Activated CD4-positive, alpha-beta T cell treated with anti-CD3 and anti-CD28 coated beads, Interleukin-2, amount 10 ng/mL, durations not matched to agents 7 days and 5 days (primary cell): ENCODE measurements at regions of chr9 and their contacts with region 1.

Region 1: GRCh38 chr9:34637356-34638137 is at the start of gene SIGMAR1:
- DNase-seq: peak; percentile 94
- H3K4me3 Mint-ChIP-seq: peak within 1 kb of the TSS; percentile 90
- H3K27ac Mint-ChIP-seq: peak within 1 kb of the TSS; percentile 93
- H3K4me1 Mint-ChIP-seq: peaks cover 39% of the 10 kb centered on the region
- H3K27me3 Mint-ChIP-seq: no peaks in the 10 kb centered on the region
- total RNA-seq, gene SIGMAR1: 57.7 to 62.2 TPM

Region 2: GRCh38 chr9:34603610-34604231 is 33.8 kb before region 1 on chr9:
- CTCF ChIA-PET with region 1: interaction called, 60 read pairs
- POLR2A ChIA-PET with region 1: no interaction called
- DNase-seq: peak; percentile 85
- H3K4me3 Mint-ChIP-seq: no peak overlapping the region
- H3K27ac Mint-ChIP-seq: no peak overlapping the region
- H3K4me1 Mint-ChIP-seq: no peaks in the 10 kb centered on the region
- H3K27me3 Mint-ChIP-seq: peaks cover 8% of the 10 kb centered on the region

Region 3: DNA sequence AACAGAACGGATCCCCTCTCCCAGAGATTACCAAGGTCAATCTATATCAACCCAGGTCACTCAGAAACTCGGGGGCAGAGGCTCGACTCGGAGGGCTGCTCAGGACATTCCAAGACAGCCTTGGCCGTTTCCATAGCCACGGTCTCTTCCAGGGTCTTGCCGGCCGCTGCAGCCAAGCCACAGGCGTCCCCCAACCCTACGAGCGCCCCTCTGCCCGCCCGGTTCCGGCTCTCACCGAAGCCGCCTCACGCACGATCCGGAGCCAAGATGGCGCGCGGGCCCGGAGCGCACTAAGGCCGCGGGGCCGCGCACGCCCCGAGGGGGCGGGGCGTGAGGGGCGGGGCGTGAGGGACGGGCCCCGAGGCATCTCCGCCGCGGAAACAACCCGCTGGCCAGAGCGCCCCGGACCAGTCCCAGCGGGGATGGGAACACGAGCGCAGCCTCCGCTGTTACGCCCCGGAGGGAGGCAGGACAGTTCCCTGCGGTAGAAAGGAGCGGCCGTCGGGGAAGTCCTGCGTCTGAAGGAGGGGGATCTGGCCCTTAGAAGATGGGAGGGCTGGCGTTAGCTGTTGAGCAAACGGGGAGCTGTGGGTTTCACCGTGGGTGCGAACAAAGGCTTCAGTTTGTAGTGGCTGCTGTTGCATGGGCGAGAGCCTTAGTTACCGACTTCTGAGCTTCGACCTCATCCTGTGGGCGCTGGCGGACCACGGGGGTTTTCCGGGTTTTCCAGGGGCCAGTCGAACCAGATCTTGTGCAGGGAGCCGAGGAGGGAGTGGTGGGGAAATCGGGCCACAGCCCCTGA is 25.5 kb before region 1 on chr9 and contains the start of gene RPP25L:
- CTCF ChIA-PET with region 1: interaction called, 60 read pairs
- POLR2A ChIA-PET with region 1: interaction called, 3 read pairs
- DNase-seq: peak; percentile 83
- H3K4me3 Mint-ChIP-seq: peak within 1 kb of the TSS; percentile 92
- H3K27ac Mint-ChIP-seq: peak within 1 kb of the TSS; percentile 96
- H3K4me1 Mint-ChIP-seq: peaks cover 23% of the 10 kb centered on the region
- H3K27me3 Mint-ChIP-seq: no peaks in the 10 kb centered on the region
- total RNA-seq, gene RPP25L: 22.7 to 26.8 TPM

Region 4: GRCh38 chr9:34620061-34620994 is 17.2 kb before region 1 on chr9 and contains the start of gene DCTN3:
- CTCF ChIA-PET with region 1: interaction called, 82 read pairs
- POLR2A ChIA-PET with region 1: interaction called, 4 read pairs
- DNase-seq: peak; percentile 97
- H3K4me3 Mint-ChIP-seq: peak within 1 kb of the TSS; percentile 96
- H3K27ac Mint-ChIP-seq: peak within 1 kb of the TSS; percentile 86
- H3K4me1 Mint-ChIP-seq: peaks cover 29% of the 10 kb centered on the region
- H3K27me3 Mint-ChIP-seq: peaks cover 29% of the 10 kb centered on the region
- total RNA-seq, gene DCTN3: 150 to 153 TPM